ENCODE measurements at regions of chr19 and their contacts with region 1.

Region 1: DNA sequence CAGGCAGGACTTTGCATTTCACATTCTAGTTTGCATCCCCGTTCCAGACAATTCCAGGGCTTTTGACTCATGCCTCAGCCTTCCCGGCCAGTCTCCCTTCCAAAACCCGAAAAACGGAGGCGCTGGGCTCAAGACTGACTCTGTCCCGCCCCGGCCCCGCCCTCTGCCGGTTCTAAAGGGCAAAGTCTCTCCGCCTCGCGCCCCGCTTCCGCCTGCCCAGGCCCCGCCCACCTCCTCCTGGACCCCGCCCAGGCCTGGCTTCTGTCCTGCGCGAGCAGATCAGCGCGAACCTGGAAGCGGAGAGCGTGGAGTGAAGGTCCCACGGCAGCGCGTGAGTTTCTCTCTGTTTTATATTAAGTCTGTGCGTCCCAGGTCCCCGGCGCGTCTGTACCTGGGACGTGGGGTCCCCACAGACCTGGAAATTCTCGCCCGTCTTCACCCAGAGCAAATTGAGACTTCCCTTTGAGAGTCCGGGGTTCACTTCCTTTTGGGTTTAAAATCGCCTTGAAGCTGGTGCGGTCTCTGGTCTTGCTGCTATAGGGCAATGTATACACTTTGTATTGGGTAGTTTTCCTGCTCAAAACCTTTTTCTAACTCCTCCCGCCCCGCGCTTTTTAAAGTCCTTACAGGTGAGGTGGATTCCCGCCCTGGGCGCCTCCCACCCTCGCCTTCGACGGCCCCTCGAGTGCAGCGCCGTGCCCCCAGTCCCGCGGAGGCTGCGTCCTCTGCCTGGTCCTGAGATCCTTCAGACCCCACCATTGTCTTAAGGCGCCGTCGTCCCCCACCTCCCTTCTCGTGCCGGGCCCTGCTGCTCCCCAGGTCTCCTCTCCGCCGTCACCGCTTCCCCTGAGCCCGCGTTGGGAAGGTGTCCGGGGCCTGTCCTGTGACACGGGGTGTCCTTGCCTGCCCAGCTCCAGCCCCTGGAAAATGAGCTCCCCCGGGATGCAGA is 31.2 kb downstream of the ZNF701 start:
- DNase-seq: peak; percentile 82 to 98
- H3K4me3 ChIP-seq: peak overlapping the region; percentile 57 to 75
- H3K27ac ChIP-seq: peak overlapping the region; percentile 81 to 85
- H3K4me1 ChIP-seq: peaks cover 0 to 8% of the 10 kb centered on the region in 2 donors
- H3K27me3 ChIP-seq: no peaks in the 10 kb centered on the region
- CTCF ChIP-seq: peak; percentile 20 to 37 (median 35)

Region 2: GRCh38 chr19:52535771-52536447 is 65.4 kb before region 1 on chr19:
- intact Hi-C with region 1: loop called (anchors 2 kb)
- DNase-seq: peak; percentile 70 to 93
- H3K4me3 ChIP-seq: peak overlapping the region; percentile 58 to 66
- H3K27ac ChIP-seq: peak overlapping the region; percentile 61 to 77
- H3K4me1 ChIP-seq: peaks cover 0 to 8% of the 10 kb centered on the region in 2 donors
- H3K27me3 ChIP-seq: no peaks in the 10 kb centered on the region
- CTCF ChIP-seq: peak in 2 of 3 experiments; percentile 23 to 33

Region 3: DNA sequence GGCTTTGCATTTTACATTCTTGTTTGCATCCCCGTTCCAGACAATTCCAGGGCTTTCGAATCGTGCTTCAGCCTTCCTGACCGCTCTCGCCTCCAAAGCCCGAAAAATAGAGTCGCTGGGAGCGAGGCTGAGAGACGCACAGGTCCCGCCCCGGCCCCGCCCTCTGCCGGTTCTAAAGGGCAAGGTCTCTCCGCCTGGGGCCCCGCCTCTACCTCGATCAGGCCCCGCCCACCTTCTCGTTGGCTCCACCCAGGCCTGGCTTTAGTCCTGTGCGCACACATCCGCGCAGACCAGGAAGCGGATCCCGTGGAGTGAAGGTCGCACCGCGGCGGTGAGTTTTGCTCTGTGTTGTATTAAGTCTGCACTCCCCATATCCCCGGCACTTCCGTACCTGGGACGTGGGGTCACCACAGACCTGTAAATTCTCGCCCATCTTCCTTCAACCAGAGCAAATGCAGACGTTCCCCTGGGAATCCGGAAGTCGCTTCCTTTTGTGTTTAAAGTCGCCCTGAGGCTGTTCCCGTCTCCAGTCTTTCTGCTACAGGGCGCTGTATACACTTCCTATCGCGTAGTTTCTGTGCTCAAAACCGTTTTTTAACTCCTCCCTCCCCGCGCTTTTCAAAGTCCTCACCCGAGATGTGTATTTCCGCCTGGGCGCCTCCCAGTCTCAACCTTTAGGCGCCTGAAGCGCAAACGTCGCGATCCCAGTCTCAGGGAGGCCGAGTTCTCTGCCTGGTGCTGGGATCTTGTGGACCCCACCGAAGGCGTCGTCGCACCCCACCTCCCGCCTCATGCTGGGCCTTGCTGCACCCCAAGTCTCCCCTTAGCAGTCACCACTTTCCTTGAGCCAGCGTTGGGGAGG is 31.1 kb before region 1 on chr19 and contains the start of gene ZNF701:
- intact Hi-C with region 1: loop called (anchors 1 kb)
- DNase-seq: peak; percentile 81 to 98
- H3K4me3 ChIP-seq: peak within 1 kb of the TSS; percentile 80 to 82
- H3K27ac ChIP-seq: peak within 1 kb of the TSS; percentile 75 to 86
- H3K4me1 ChIP-seq: peaks cover 0 to 5% of the 10 kb centered on the region in 2 donors
- H3K27me3 ChIP-seq: no peaks in the 10 kb centered on the region
- CTCF ChIP-seq: peak in 2 of 3 experiments; percentile 26 to 48
- total RNA-seq, gene ZNF701: 13.2 TPM

Region 4: GRCh38 chr19:52637718-52638585 is 36.7 kb after region 1 on chr19 and contains the start of gene ZNF83:
- intact Hi-C with region 1: loop called (anchors 1 kb)
- DNase-seq: peak; percentile 92 to 99
- H3K4me3 ChIP-seq: peak within 1 kb of the TSS; percentile 62 to 77
- H3K27ac ChIP-seq: peak within 1 kb of the TSS; percentile 87 to 92
- H3K4me1 ChIP-seq: peaks cover 0 to 14% of the 10 kb centered on the region in 2 donors
- H3K27me3 ChIP-seq: no peaks in the 10 kb centered on the region
- CTCF ChIP-seq: no peak
- total RNA-seq, gene ZNF83: 29.1 TPM

Region 5: GRCh38 chr19:52648336-52649016 is 47.2 kb after region 1 on chr19:
- intact Hi-C with region 1: loop called (anchors 2 kb)
- DNase-seq: no peak
- H3K4me3 ChIP-seq: peak overlapping the region in 1 of 2 donors; percentile 33
- H3K27ac ChIP-seq: peak overlapping the region; percentile 77 to 89
- H3K4me1 ChIP-seq: peaks cover 18 to 19% of the 10 kb centered on the region in 2 donors
- H3K27me3 ChIP-seq: no peaks in the 10 kb centered on the region
- CTCF ChIP-seq: no peak

Region 6: GRCh38 chr19:52690369-52691214 is 89.3 kb after region 1 on chr19:
- intact Hi-C with region 1: loop called (anchors 1 kb)
- DNase-seq: peak; percentile 89 to 98
- H3K4me3 ChIP-seq: peak overlapping the region; percentile 56 to 89
- H3K27ac ChIP-seq: peak overlapping the region; percentile 95 to 98
- H3K4me1 ChIP-seq: peaks cover 3 to 28% of the 10 kb centered on the region in 2 donors
- H3K27me3 ChIP-seq: no peaks in the 10 kb centered on the region
- CTCF ChIP-seq: peak in 2 of 3 experiments; percentile 16 to 19

Measured in ascending aorta (tissue), 2 donors.